H1 (cell line): ENCODE measurements at regions of chr17 and their contacts with region 1.

Region 1: GRCh38 chr17:8894673-8895578 is 27.5 kb upstream of the PIK3R6 start:
- DNase-seq: peak in 1 of 2 experiments; percentile 74
- H3K4me3 ChIP-seq: peak overlapping the region in 2 of 4 experiments; percentile 21 to 54; a peak in 3 of 8 replicates
- H3K27ac ChIP-seq: no peak overlapping the region
- H3K4me1 ChIP-seq: peaks cover 0 to 11% (median 8%) of the 10 kb centered on the region in 4 experiments; a peak in 4 of 7 replicates
- H3K27me3 ChIP-seq: no peaks in the 10 kb centered on the region; a peak in 1 of 7 replicates
- CTCF ChIP-seq: peak; percentile 58 to 79 (median 76)
- EP300 ChIP-seq: no peak
- POLR2A ChIP-seq: no peak
- RAD21 ChIP-seq: peak; percentile 83 to 85

Region 2: GRCh38 chr17:8798846-8799569 is 95.9 kb before region 1 on chr17 and contains the start of gene MFSD6L:
- CTCF ChIA-PET with region 1: interaction called, 107 read pairs
- POLR2A ChIA-PET with region 1: interaction called, 3 read pairs
- DNase-seq: peak; percentile 67 to 83
- H3K4me3 ChIP-seq: peak within 1 kb of the TSS; percentile 44 to 71 (median 56)
- H3K27ac ChIP-seq: no peak within 1 kb of the TSS; the same call in 1 of the 2 replicates
- H3K4me1 ChIP-seq: peaks cover 0 to 19% (median 9%) of the 10 kb centered on the region in 4 experiments; a peak in 6 of 7 replicates
- H3K27me3 ChIP-seq: peaks cover 0 to 6% (median 1%) of the 10 kb centered on the region in 4 experiments; a peak in 3 of 7 replicates
- CTCF ChIP-seq: peak; percentile 40 to 64 (median 47)
- EP300 ChIP-seq: 0 out of 3 replicates have a peak, but pooled peaks of 1 of the 2 experiments have one; percentile 49
- POLR2A ChIP-seq: no peak; a peak in 1 of 3 replicates
- RAD21 ChIP-seq: peak; percentile 64 to 72
- total RNA-seq, gene MFSD6L: 2.6 and 2.8 TPM in 2 replicates

Region 3: DNA sequence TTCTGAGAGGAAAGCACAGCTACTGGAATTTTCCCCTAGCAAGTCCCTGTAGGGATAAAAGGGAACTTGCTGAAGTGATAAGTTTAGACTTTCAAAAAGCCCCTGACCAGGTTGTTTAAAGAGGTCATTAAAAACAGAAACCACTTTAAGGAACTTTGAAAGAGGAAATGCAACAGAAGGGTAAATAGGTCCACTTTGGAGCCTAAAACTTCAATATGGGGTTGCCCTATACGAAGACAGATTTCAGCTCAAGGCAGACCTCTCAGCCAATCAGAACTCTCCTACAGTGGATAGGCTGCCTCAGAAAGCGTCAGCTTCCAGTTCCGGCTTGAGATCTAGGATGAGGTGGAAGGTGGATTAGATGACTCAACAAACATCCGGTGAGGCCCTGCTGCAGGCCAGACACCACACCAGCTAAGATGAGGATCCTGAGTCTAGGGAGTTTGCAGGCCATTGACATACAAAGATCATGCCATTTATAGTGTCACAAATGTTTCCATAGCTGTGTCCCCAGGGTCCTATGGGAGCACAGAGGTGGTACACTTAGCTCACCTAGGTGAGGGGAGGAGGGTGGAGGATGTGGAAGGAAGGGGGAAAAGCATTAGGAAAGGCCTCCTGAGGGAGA is 87.9 kb before region 1 on chr17:
- CTCF ChIA-PET with region 1: interaction called, 107 read pairs
- POLR2A ChIA-PET with region 1: interaction called, 3 read pairs
- DNase-seq: peak in 1 of 2 experiments; percentile 16
- H3K4me3 ChIP-seq: no peak overlapping the region
- H3K27ac ChIP-seq: no peak overlapping the region
- H3K4me1 ChIP-seq: peaks cover 0 to 9% (median 4%) of the 10 kb centered on the region in 4 experiments; a peak in 2 of 7 replicates
- H3K27me3 ChIP-seq: no peaks in the 10 kb centered on the region; a peak in 1 of 7 replicates
- CTCF ChIP-seq: no peak
- EP300 ChIP-seq: no peak
- POLR2A ChIP-seq: no peak
- RAD21 ChIP-seq: no peak

Region 4: DNA sequence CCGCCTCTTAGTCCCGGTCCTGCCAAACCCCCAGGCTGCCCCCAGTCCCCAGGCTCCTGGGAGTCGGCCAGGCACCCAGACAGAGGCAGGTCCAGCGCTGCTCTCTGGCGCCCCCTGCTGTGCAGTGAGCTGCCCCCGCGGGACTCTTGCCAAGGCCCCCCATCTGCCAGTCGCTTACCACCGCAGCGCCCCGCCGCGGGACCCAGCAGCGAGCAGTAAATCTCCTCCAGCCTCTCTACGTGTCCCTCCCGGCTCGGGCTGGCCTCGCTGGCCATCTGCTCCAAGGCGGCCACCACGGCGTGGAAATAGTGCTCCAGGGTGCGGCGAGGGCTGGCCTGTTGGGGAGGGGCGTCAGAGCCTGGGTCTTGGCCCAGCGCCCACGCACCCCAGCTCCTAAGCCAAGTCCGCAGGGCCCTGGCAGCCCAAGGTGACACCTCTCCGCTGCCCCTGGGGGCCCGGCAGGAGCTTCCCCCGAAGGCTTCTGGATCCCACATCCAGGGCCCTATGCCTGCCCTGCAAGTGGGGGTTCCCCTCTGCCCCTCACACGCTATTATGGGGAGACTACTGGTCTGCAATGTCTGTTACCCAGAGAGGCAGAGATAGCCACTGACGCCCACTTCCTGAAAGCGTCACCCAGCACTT is 62.1 kb before region 1 on chr17:
- CTCF ChIA-PET with region 1: interaction called, 28 read pairs
- POLR2A ChIA-PET with region 1: no interaction called
- DNase-seq: peak; percentile 59 to 95
- H3K4me3 ChIP-seq: no peak overlapping the region
- H3K27ac ChIP-seq: no peak overlapping the region
- H3K4me1 ChIP-seq: peaks cover 0 to 5% (median 4%) of the 10 kb centered on the region in 4 experiments
- H3K27me3 ChIP-seq: no peaks in the 10 kb centered on the region
- CTCF ChIP-seq: peak; percentile 68 to 83 (median 69)
- EP300 ChIP-seq: no peak
- POLR2A ChIP-seq: no peak
- RAD21 ChIP-seq: peak; percentile 48 to 71

Region 5: GRCh38 chr17:8869114-8869815 is 25.7 kb before region 1 on chr17:
- CTCF ChIA-PET with region 1: interaction called, 11 read pairs
- POLR2A ChIA-PET with region 1: interaction called, 3 read pairs
- DNase-seq: no peak
- H3K4me3 ChIP-seq: no peak overlapping the region
- H3K27ac ChIP-seq: no peak overlapping the region
- H3K4me1 ChIP-seq: peaks cover 0 to 2% (median 0%) of the 10 kb centered on the region in 4 experiments; a peak in 3 of 7 replicates
- H3K27me3 ChIP-seq: peaks cover 0 to 2% (median 0%) of the 10 kb centered on the region in 4 experiments; a peak in 2 of 7 replicates
- CTCF ChIP-seq: no peak
- EP300 ChIP-seq: no peak
- POLR2A ChIP-seq: no peak
- RAD21 ChIP-seq: no peak

Region 6: DNA sequence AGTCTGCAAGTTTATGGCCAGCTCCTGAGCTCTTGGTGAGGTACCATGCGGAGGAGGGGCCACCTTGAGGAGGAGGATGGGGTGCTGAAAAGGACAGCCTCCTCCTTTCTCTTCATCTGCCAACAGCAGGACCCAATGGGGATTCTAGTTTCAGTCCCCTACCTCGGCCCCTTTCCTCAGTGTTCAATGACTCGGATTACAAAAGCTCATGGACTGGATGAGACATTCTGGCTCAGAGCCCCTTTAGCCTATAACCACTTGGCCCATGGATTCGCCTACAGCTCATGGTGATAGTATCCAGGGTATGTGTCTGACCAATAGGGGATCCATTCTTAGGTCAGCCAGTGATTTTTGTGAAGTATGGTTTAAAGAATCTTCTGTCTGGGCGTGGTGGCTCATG is 19.0 kb before region 1 on chr17:
- CTCF ChIA-PET with region 1: interaction called, 14 read pairs
- POLR2A ChIA-PET with region 1: interaction called, 3 read pairs
- DNase-seq: no peak
- H3K4me3 ChIP-seq: no peak overlapping the region
- H3K27ac ChIP-seq: no peak overlapping the region
- H3K4me1 ChIP-seq: peaks cover 0 to 9% (median 7%) of the 10 kb centered on the region in 4 experiments; a peak in 6 of 7 replicates
- H3K27me3 ChIP-seq: no peaks in the 10 kb centered on the region
- CTCF ChIP-seq: no peak
- EP300 ChIP-seq: no peak
- POLR2A ChIP-seq: no peak
- RAD21 ChIP-seq: no peak

Region 7: DNA sequence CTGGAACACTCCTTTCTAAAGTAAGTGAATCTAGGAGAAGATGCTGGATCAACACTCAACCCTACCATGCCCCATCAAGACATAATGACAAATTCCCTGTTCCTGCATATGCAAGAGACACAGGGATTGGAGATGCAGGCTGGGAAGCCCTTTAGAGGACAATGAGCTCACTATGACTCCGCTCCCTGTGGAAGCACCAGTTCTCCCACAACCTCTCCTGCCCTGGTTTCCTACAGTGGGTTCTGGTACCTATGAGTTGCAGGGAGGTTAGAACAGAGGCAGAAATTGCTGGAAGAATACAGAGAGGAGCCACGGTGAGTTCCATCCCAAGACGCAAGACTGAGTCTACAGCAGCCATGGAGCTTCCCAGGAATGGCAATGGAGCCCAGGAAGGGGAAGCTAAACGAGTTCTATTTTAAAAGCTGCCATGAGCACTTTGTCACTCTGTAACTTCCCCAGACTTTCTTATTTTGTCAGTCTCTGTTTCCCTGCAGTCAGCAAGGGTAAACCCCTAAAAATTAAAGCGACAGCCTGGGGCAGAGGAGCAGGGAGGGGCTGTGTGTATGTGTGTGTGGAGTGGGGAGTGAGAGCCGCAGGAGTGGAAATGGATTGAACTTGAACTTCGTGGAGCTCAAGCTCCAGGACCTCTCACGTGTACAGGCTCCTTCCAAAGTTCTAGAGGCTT is 14.8 kb after region 1 on chr17:
- CTCF ChIA-PET with region 1: interaction called, 37 read pairs
- POLR2A ChIA-PET with region 1: interaction called, 5 read pairs
- DNase-seq: no peak
- H3K4me3 ChIP-seq: no peak overlapping the region
- H3K27ac ChIP-seq: no peak overlapping the region
- H3K4me1 ChIP-seq: no peaks in the 10 kb centered on the region
- H3K27me3 ChIP-seq: no peaks in the 10 kb centered on the region
- CTCF ChIP-seq: no peak
- EP300 ChIP-seq: no peak
- POLR2A ChIP-seq: no peak
- RAD21 ChIP-seq: no peak